Vagina (tissue), 2 donors: ENCODE measurements at regions of chr3 and their contacts with region 1.

Region 1: DNA sequence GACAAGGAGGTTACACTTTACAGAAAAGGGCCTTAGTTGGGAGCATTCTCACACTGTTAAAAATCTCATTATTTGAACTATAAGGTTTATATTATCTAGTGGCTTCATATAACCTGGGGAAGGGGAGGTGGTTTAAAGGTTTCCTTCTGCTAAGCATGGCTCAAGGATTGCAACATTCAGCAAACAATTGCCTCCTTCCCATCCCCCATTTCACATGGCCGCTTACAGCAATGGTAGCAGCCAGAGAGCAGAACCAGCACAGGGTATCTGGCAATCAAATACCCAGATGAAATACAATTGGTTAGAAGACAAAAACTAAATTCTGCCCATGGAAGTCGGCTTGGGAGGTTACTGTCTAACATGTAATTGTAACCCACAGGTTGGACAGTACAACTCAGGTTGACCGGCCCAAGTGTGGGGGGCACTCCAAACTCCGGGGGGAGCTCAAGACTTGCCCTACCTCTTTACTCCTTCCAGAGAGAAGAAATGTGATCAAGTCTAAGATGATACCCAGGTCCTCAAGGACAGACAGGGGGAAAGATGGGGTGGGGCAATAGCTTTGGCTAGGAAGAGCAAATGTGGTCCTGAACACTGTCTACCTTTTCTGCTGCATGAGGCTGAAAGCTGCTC is 15.5 kb downstream of the ETV5 start:
- DNase-seq: no peak
- H3K4me3 ChIP-seq: no peak overlapping the region
- H3K27ac ChIP-seq: no peak overlapping the region
- H3K4me1 ChIP-seq: peaks cover 22% of the 10 kb centered on the region
- H3K27me3 ChIP-seq: no peaks in the 10 kb centered on the region
- CTCF ChIP-seq: no peak
- POLR2A ChIP-seq: no peak

Region 2: GRCh38 chr3:186035277-186035676 is 58.1 kb before region 1 on chr3:
- intact Hi-C with region 1: no loop called
- DNase-seq: no peak
- H3K4me3 ChIP-seq: no peak overlapping the region
- H3K27ac ChIP-seq: no peak overlapping the region
- H3K4me1 ChIP-seq: no peaks in the 10 kb centered on the region
- H3K27me3 ChIP-seq: no peaks in the 10 kb centered on the region
- CTCF ChIP-seq: no peak
- POLR2A ChIP-seq: no peak

Region 3: GRCh38 chr3:186669378-186670084 is 576.1 kb after region 1 on chr3:
- intact Hi-C with region 1: loop called (anchors 5 kb)
- DNase-seq: no peak
- H3K4me3 ChIP-seq: no peak overlapping the region
- H3K27ac ChIP-seq: no peak overlapping the region
- H3K4me1 ChIP-seq: no peaks in the 10 kb centered on the region
- H3K27me3 ChIP-seq: no peaks in the 10 kb centered on the region
- CTCF ChIP-seq: no peak
- POLR2A ChIP-seq: no peak